Panc1 (cell line): ENCODE measurements at regions of chr4 and their contacts with region 1.

Region 1: DNA sequence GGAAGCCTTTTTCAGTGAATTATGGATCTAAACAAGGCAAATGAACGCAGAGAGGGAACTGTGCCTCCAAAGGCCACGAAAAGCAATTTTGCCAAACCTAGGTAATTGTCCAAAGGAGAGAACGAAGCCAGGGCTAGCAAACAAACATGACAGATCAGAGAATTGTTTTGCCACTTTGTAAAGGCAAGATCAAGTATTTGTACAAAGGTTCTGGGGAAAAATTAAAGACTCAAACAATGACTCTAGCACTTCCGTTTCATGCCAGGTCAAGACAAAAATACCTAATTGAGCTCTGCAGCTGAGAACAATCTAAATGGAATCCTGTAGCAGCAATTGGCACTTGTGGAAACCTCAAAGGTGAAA is 8.5 kb downstream of the RBM47 start:
- DNase-seq: no peak
- ATAC-seq: no peak
- H3K4me3 ChIP-seq: no peak overlapping the region
- H3K27ac ChIP-seq: no peak overlapping the region
- H3K4me1 ChIP-seq: 0 out of 2 replicates have a peak, but pooled peaks cover 2% of the 10 kb centered on the region
- H3K27me3 ChIP-seq: no peaks in the 10 kb centered on the region; the same call in 1 of the 2 replicates
- CTCF ChIP-seq: no peak

Region 2: GRCh38 chr4:40536032-40536431 is 85.2 kb before region 1 on chr4:
- CTCF ChIA-PET with region 1: no interaction called
- POLR2A ChIA-PET with region 1: interaction called, 13 read pairs
- in situ Hi-C with region 1: no loop called
- intact Hi-C with region 1: no loop called
- DNase-seq: no peak
- ATAC-seq: no peak
- H3K4me3 ChIP-seq: no peak overlapping the region
- H3K27ac ChIP-seq: no peak overlapping the region
- H3K4me1 ChIP-seq: no peaks in the 10 kb centered on the region
- H3K27me3 ChIP-seq: no peaks in the 10 kb centered on the region
- CTCF ChIP-seq: no peak

Region 3: DNA sequence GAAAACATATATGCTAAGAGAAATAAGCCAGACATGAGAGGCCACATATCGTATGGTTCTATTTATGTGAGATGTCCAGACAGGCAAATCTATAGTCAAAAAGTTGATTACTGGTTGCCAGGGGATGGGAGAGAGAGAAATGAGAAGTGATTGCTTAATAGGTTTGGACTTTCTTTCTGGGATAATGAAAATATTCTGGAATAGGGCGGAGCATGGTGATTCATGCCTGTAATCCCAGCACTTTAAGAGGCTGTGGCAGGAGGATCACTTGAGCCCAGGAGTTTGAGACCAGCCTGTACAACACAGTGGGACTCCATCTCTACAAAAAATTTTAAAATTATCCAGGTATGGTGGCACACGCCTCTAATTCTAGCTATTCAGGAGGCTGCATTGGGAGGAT is 14.0 kb before region 1 on chr4:
- CTCF ChIA-PET with region 1: no interaction called
- POLR2A ChIA-PET with region 1: no interaction called
- in situ Hi-C with region 1: no loop called
- intact Hi-C with region 1: no loop called
- DNase-seq: no peak
- ATAC-seq: no peak
- H3K4me3 ChIP-seq: no peak overlapping the region
- H3K27ac ChIP-seq: no peak overlapping the region
- H3K4me1 ChIP-seq: no peaks in the 10 kb centered on the region
- H3K27me3 ChIP-seq: no peaks in the 10 kb centered on the region
- CTCF ChIP-seq: no peak

Region 4: GRCh38 chr4:40831146-40831907 is 210.1 kb after region 1 on chr4:
- CTCF ChIA-PET with region 1: no interaction called
- POLR2A ChIA-PET with region 1: no interaction called
- in situ Hi-C with region 1: no loop called
- intact Hi-C with region 1: no loop called
- DNase-seq: no peak
- ATAC-seq: no peak
- H3K4me3 ChIP-seq: no peak overlapping the region
- H3K27ac ChIP-seq: no peak overlapping the region
- H3K4me1 ChIP-seq: no peaks in the 10 kb centered on the region
- H3K27me3 ChIP-seq: no peaks in the 10 kb centered on the region
- CTCF ChIP-seq: no peak